B cell (primary cell): ENCODE measurements at regions of chr16 and their contacts with region 1.

Region 1: DNA sequence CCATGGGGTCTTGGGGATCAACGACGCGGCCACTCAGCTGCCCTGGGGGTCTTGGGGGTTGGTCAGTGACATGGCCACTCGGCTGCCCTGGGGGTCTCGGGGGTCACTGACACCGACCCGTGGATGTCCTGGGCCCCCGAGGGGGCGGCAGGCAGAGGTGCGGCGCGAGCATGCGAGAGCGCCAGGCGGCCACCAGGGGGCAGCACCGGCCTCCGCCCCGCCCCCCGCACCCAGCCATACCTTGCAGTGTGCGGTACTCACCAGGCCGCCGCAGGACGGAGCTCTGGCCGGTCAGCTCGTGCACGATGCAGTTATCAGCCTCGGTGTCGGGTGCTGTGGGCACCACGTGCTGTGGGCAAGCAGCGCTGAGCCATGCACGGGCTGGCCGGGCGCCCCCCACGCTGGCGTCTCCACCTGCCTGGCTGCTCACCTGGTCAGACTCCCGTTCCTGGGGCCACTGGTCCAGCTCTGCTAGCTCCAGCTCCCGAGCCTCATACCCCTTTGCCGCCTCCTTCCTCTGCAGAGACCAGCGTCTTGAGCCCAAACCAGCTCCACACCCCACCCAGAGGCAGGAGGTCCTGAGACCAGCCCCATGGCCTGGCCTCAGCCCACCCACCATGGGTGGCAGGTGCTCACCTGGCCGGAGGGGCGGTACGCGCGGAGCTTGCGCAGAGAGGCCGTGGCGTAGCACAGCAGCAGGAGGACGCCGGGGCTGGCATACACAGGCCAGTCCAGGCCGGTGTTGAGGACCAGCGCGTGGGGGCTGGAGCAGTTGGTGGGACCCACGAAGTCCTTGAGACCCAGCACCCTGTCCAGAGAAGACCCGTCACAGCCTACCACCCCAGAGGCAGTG is 31.2 kb downstream of the CTU2 start:
- DNase-seq: peak; percentile 84
- ATAC-seq: peak; percentile 97
- H3K4me3 ChIP-seq: no peak overlapping the region
- H3K4me3 Mint-ChIP-seq: no peak overlapping the region
- H3K27ac ChIP-seq: no peak overlapping the region
- H3K27ac Mint-ChIP-seq: no peak overlapping the region
- H3K4me1 ChIP-seq: peaks cover 5 to 20% of the 10 kb centered on the region in 2 donors
- H3K4me1 Mint-ChIP-seq: peaks cover 6% of the 10 kb centered on the region
- H3K27me3 ChIP-seq: no peaks in the 10 kb centered on the region
- H3K27me3 Mint-ChIP-seq: no peaks in the 10 kb centered on the region
- CTCF ChIP-seq: peak; percentile 99

Region 2: GRCh38 chr16:88700636-88701482 is 36.7 kb before region 1 on chr16:
- CTCF ChIA-PET with region 1: interaction called, 10 read pairs
- POLR2A ChIA-PET with region 1: no interaction called
- intact Hi-C with region 1: loop called (anchors 2 kb)
- DNase-seq: peak; percentile 91
- ATAC-seq: peak; percentile 79
- H3K4me3 ChIP-seq: peak overlapping the region; percentile 32 to 69 (median 54)
- H3K4me3 Mint-ChIP-seq: peak overlapping the region; percentile 84
- H3K27ac ChIP-seq: peak overlapping the region; percentile 84 to 91
- H3K27ac Mint-ChIP-seq: peak overlapping the region; percentile 96
- H3K4me1 ChIP-seq: peaks cover 61 to 83% of the 10 kb centered on the region in 2 donors
- H3K4me1 Mint-ChIP-seq: peaks cover 70% of the 10 kb centered on the region
- H3K27me3 ChIP-seq: no peaks in the 10 kb centered on the region
- H3K27me3 Mint-ChIP-seq: no peaks in the 10 kb centered on the region
- CTCF ChIP-seq: no peak

Region 3: DNA sequence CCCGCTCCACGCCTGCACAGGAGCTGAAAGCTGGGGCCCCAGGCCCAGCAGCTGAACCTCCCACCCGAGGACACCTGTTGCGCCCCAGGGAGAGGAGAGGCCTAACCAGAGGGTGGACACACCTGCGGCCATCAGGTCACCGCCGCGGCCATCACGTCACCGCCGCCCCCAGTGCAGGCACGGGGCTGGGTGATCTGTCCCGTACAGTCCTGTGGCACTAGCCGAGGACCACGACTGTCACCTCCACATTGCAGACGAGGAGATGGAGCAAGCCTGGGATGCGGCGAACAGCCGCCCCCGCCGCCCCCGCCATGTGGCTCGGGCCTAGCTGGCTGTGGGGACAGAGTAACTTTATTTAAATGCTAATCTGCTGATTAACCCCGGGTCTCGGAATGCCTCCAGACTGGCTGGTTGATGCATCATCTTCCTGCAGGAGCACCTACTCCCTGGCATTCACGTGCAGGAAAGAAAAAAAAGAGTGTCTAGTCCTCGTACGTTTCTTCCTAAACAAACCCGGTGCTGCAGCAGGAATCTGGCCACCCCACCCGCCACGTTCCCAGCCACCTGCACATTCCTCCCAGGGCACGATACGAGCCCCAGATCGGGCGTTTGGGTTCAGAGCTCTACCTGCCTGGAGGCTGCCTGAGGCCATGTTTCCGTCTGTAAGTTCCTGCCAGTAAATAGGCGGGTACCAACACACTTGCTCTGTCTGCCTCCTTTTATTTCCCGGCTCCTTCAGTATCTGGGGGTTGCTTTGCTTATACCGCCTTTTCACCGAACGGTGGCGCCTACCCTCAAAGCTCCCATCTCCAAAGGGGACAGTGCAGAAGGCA is 17.6 kb after region 1 on chr16:
- CTCF ChIA-PET with region 1: interaction called, 41 read pairs
- POLR2A ChIA-PET with region 1: no interaction called
- intact Hi-C with region 1: no loop called
- DNase-seq: no peak
- ATAC-seq: no peak
- H3K4me3 ChIP-seq: no peak overlapping the region
- H3K4me3 Mint-ChIP-seq: no peak overlapping the region
- H3K27ac ChIP-seq: no peak overlapping the region
- H3K27ac Mint-ChIP-seq: no peak overlapping the region
- H3K4me1 ChIP-seq: peaks cover 0 to 16% of the 10 kb centered on the region in 2 donors
- H3K4me1 Mint-ChIP-seq: peaks cover 25% of the 10 kb centered on the region
- H3K27me3 ChIP-seq: no peaks in the 10 kb centered on the region
- H3K27me3 Mint-ChIP-seq: no peaks in the 10 kb centered on the region
- CTCF ChIP-seq: no peak

Region 4: DNA sequence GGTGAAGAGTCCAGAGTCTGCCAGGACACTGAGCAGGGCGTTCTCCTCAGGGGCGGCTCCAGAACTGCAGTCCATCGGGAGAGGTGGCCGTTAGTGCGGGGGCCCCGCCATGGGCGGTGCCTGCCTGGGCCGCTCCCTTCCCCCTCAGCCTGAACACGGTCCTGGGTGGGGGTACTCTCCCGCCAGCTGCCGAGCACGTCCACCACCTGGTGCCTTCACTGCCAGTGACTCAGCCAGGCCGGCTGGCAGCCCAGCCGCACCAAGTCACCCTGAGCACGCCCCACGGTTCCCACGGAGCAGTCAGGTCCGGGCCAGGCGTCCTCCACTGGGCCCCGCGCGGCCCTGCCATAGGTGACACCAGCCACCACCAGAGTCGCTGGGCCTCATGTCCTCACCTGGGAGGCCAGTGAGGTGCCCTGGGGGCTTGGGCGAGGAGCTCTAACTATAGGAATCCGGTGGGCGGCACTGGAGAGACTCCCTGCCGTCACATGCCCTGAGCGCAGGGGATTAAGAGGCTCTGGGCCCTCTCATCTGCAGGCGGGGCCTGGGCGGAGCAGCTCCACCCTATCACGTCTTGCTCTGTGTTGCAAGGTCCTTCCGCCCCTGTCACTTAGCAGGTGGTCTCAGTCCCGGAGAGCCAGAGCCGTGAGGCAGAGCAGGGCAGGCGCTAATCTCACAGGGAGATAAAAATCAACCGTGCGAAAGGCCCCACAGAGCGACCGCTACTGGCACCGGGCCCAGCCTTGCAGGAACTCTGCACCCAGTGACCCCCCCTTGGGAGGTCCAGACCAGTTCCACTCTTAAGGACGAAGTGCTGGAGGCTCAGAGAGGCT is 33.2 kb after region 1 on chr16:
- CTCF ChIA-PET with region 1: interaction called, 18 read pairs
- POLR2A ChIA-PET with region 1: interaction called, 3 read pairs
- intact Hi-C with region 1: no loop called
- DNase-seq: peak; percentile 70
- ATAC-seq: peak; percentile 42
- H3K4me3 ChIP-seq: peak overlapping the region in 2 of 5 experiments; percentile 4 to 11
- H3K4me3 Mint-ChIP-seq: peak overlapping the region; percentile 65
- H3K27ac ChIP-seq: peak overlapping the region; percentile 24 to 43
- H3K27ac Mint-ChIP-seq: peak overlapping the region; percentile 84
- H3K4me1 ChIP-seq: peaks cover 52 to 69% of the 10 kb centered on the region in 2 donors
- H3K4me1 Mint-ChIP-seq: peaks cover 53% of the 10 kb centered on the region
- H3K27me3 ChIP-seq: no peaks in the 10 kb centered on the region
- H3K27me3 Mint-ChIP-seq: no peaks in the 10 kb centered on the region
- CTCF ChIP-seq: no peak

Region 5: GRCh38 chr16:88803264-88803987 is 65.9 kb after region 1 on chr16 and contains the start of gene CDT1:
- CTCF ChIA-PET with region 1: interaction called, 33 read pairs
- POLR2A ChIA-PET with region 1: no interaction called
- intact Hi-C with region 1: no loop called
- DNase-seq: peak; percentile 92
- ATAC-seq: peak; percentile 68
- H3K4me3 ChIP-seq: peak within 1 kb of the TSS; percentile 52 to 81 (median 77)
- H3K4me3 Mint-ChIP-seq: peak within 1 kb of the TSS; percentile 86
- H3K27ac ChIP-seq: peak within 1 kb of the TSS; percentile 54 to 67
- H3K27ac Mint-ChIP-seq: peak within 1 kb of the TSS; percentile 87
- H3K4me1 ChIP-seq: peaks cover 26 to 40% of the 10 kb centered on the region in 2 donors
- H3K4me1 Mint-ChIP-seq: peaks cover 21% of the 10 kb centered on the region
- H3K27me3 ChIP-seq: peaks cover 0 to 4% (median 0%) of the 10 kb centered on the region in 4 experiments
- H3K27me3 Mint-ChIP-seq: no peaks in the 10 kb centered on the region
- CTCF ChIP-seq: no peak
- total RNA-seq, gene CDT1: 0.27 and 1.3 TPM in 2 replicates

Region 6: DNA sequence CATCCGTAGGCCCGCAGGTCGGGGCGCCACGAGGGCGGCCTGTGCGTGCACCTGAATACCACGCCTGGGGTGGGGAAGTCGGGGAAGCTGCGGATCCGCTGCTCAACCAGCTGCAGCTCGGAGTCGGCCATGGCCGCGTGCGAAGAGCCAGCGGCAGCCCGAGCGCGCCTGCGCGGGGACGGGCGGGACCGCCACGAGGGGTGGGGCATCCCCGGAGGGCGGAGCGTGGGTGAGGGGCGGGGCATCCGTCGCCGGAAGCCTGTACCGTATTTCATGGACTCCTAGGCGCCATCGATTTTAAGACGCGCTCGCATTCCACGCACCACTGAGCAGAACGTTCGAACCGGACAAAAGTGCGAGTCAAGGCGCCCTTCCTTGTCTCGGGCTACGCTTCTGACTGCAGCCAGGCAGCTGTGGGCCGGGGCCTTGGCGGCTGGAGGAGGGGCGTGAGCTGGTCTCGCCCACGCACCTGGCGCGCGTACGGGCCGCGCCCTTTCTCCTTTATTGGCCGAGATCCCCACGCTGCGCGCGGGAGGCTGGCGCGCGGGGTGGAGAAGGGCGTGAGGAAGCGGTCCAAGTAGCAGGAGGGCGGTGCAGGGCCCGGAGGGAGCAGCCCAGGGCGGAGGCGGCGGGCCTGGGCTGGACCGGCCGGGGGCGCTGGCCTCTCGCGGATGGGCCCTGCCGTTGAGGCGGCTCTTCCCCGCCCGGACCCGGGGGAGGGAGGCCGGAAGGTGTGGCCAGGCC is 74.4 kb after region 1 on chr16 and contains the start of gene APRT:
- CTCF ChIA-PET with region 1: interaction called, 23 read pairs
- POLR2A ChIA-PET with region 1: interaction called, 4 read pairs
- intact Hi-C with region 1: loop called (anchors 1 kb)
- DNase-seq: peak; percentile 97
- ATAC-seq: peak; percentile 87
- H3K4me3 ChIP-seq: peak within 1 kb of the TSS; percentile 45 to 90 (median 77)
- H3K4me3 Mint-ChIP-seq: peak within 1 kb of the TSS; percentile 98
- H3K27ac ChIP-seq: peak within 1 kb of the TSS; percentile 61 to 65
- H3K27ac Mint-ChIP-seq: peak within 1 kb of the TSS; percentile 99
- H3K4me1 ChIP-seq: peaks cover 11 to 27% of the 10 kb centered on the region in 2 donors
- H3K4me1 Mint-ChIP-seq: peaks cover 19% of the 10 kb centered on the region
- H3K27me3 ChIP-seq: no peaks in the 10 kb centered on the region
- H3K27me3 Mint-ChIP-seq: no peaks in the 10 kb centered on the region
- CTCF ChIP-seq: no peak
- total RNA-seq, gene APRT: 111 and 124 TPM in 2 replicates

Region 7: DNA sequence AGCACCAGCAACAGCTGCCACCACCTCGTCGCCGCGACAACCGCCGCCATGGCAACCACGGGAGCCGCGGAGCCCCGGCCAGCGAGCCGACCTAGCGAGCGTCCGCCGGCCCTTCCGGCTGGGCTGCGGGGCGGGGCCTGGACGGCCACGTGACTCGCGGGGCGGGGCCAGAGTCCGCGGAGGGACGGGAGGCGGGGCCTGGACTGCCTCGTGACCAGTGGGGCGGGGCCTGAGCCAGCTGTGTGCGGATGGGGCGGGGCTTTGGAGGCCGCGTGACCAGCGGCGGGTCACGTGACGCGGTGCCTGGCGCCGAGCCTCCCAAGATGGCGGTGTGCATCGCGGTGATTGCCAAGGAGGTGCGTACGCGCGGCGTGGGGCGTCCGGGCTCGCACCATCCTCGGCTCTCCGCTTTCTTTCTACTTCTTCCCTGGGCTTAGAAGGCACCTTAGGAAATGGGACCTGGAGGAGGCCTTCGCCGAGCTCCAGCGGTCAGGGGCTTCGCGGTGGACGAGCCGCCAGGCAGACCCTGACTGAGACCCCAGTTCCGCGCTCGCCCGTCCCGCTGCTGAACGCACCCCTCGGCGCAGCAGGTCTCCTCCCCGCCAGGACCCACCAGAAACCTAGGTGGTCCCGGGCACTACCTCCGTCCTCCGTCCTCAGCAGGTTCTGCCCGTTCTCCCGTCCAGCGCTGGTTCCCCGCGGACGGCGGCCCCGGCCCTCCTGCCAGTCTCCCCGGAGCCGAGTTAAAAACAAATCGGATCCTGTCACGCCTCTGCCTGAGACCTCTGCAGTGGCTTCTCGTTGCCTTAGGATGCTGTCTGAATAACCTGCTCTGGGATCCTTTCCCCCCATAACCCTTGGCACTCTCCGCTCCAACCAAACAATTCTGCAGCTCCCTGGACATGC is 119.6 kb after region 1 on chr16 and contains the starts of genes GALNS and TRAPPC2L:
- CTCF ChIA-PET with region 1: interaction called, 50 read pairs
- POLR2A ChIA-PET with region 1: no interaction called
- intact Hi-C with region 1: loop called (anchors 1 kb)
- DNase-seq: peak; percentile 97
- ATAC-seq: peak; percentile 91
- H3K4me3 ChIP-seq: peak within 1 kb of the TSS; percentile 80 to 98 (median 93)
- H3K4me3 Mint-ChIP-seq: peak within 1 kb of the TSS; percentile 97
- H3K27ac ChIP-seq: peak within 1 kb of the TSS; percentile 63 to 84
- H3K27ac Mint-ChIP-seq: peak within 1 kb of the TSS; percentile 94
- H3K4me1 ChIP-seq: peaks cover 30 to 36% of the 10 kb centered on the region in 2 donors
- H3K4me1 Mint-ChIP-seq: peaks cover 38% of the 10 kb centered on the region
- H3K27me3 ChIP-seq: no peaks in the 10 kb centered on the region
- H3K27me3 Mint-ChIP-seq: no peaks in the 10 kb centered on the region
- CTCF ChIP-seq: no peak
- total RNA-seq, gene GALNS: 68.4 and 81.3 TPM in 2 replicates
- total RNA-seq, gene TRAPPC2L: 55.5 and 65.1 TPM in 2 replicates

Region 8: GRCh38 chr16:88882358-88883030 is 145.0 kb after region 1 on chr16:
- CTCF ChIA-PET with region 1: no interaction called
- POLR2A ChIA-PET with region 1: no interaction called
- intact Hi-C with region 1: no loop called
- DNase-seq: no peak
- ATAC-seq: peak; percentile 55
- H3K4me3 ChIP-seq: no peak overlapping the region
- H3K4me3 Mint-ChIP-seq: no peak overlapping the region
- H3K27ac ChIP-seq: peak overlapping the region in 1 of 2 donors; percentile 5
- H3K27ac Mint-ChIP-seq: peak overlapping the region; percentile 26
- H3K4me1 ChIP-seq: peaks cover 0 to 8% of the 10 kb centered on the region in 2 donors
- H3K4me1 Mint-ChIP-seq: peaks cover 6% of the 10 kb centered on the region
- H3K27me3 ChIP-seq: no peaks in the 10 kb centered on the region
- H3K27me3 Mint-ChIP-seq: no peaks in the 10 kb centered on the region
- CTCF ChIP-seq: no peak